Activated T-helper 2 cell treated with anti-CD3 and anti-CD28 coated beads, Interferon-gamma antibody, Interleukin-2, Interleukin-4, amounts not matched to agents 10 μg/mL and 5 μg/mL and 100 μg/mL, durations not matched to agents 14 hours and 24 hours and 36 hours (primary cell): ENCODE measurements at regions of chr1 and their contacts with region 1.

Region 1: GRCh38 chr1:85259118-85259911 is at the start of gene C1orf52:
- DNase-seq: peak; percentile 94
- H3K4me3 Mint-ChIP-seq: peak within 1 kb of the TSS; percentile 95
- H3K27ac Mint-ChIP-seq: peak within 1 kb of the TSS; percentile 89
- H3K4me1 Mint-ChIP-seq: peaks cover 23% of the 10 kb centered on the region
- H3K27me3 Mint-ChIP-seq: no peaks in the 10 kb centered on the region
- total RNA-seq, gene C1orf52: 23.9 and 25.8 TPM in 2 replicates

Region 2: DNA sequence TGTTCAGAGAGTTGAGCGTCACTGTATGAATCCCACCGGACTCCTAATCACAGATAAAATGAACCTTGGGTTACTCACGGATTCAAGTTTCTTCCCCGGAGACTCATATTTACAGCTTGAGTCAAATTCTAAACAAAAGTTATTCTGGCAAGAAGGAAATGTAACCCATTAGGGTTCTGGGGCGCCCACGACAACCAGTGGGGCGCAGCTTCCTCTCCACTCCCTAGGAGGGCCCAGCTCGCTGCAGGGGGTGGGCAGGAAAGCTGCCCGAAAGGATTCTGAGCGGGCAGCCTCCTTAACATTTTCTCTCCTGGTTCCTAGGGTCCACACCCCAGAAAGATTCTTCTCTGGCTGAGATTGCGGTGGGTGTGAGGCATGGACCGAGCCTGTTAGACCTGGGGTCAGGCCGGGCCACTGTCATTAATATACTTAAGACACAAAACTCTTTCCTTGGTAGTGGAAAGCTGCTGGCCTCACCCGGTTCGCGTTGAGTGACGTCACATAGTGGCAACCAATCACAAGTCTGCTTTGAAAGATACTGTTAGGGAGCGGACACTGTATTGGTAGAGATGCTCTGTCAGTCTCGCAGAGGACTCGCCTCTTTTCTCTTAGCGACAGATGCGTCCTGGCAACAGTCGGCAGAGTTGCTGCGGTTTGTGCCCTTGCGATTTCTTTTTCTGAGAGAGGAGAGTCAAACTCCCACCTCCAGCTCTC is 197.4 kb before region 1 on chr1:
- intact Hi-C with region 1: loop called (anchors 1 kb)
- DNase-seq: peak; percentile 89
- H3K4me3 Mint-ChIP-seq: peak overlapping the region; percentile 79
- H3K27ac Mint-ChIP-seq: peak overlapping the region; percentile 83
- H3K4me1 Mint-ChIP-seq: peaks cover 18% of the 10 kb centered on the region
- H3K27me3 Mint-ChIP-seq: peaks cover 21% of the 10 kb centered on the region

Region 3: DNA sequence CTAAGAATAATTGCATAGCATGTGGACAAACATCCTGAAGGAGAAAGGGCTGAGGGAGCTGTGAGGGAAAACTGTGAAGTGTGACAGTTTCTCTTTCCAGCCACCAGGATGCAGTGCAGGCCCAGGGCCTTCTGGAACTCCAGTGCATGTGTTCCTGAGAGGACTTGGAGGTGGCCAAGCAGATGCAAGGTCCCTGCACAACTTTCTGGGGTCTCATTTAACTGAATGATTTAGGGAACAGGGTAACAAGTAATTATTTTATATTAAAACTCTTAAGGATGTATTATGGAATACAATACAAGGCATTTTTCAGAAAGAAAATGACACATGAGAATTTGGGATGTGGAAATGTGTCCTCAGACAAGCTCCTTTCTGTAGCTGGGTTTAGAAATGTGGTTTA is 149.8 kb before region 1 on chr1:
- intact Hi-C with region 1: loop called (anchors 1 kb)
- DNase-seq: no peak
- H3K4me3 Mint-ChIP-seq: no peak overlapping the region
- H3K27ac Mint-ChIP-seq: no peak overlapping the region
- H3K4me1 Mint-ChIP-seq: no peaks in the 10 kb centered on the region
- H3K27me3 Mint-ChIP-seq: peaks cover 21% of the 10 kb centered on the region

Region 4: DNA sequence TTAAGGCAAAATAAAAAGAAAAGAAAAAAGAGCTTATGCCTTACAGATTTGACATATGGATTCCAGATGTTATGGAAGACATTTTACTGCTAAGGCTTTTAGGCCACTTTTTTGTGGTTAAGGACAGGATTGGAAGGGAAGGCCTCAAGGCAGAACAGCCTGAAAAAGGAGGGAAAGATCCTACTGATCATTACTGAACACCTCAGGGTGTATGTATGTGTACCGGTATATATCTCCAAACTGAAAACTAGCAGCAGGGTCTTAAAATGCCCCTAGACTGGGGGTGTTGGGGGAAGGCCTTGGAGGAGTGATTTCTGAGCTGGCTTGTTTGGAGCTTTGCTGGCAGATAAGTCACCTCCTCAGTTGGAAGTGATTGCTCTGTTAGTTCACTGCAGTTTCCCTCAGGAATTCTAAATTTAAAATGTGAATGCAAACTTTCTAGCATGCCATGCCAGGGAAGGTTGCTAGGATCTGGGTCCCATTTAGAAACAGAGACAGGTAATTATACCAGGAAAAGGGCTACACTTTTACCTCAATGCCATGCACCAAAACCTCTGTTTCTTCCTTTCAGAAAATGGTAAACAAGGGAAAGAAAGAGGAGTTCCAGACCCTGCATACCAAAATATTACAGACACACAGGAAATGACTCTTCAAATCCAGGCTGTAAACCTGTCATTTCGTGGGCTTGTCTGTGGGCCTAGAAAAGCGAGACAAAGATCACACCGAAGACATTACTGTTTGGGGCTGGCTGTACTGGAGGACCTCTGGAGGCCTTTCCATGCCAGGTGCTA is 14.8 kb before region 1 on chr1:
- intact Hi-C with region 1: no loop called
- DNase-seq: no peak
- H3K4me3 Mint-ChIP-seq: no peak overlapping the region
- H3K27ac Mint-ChIP-seq: no peak overlapping the region
- H3K4me1 Mint-ChIP-seq: peaks cover 18% of the 10 kb centered on the region
- H3K27me3 Mint-ChIP-seq: no peaks in the 10 kb centered on the region